Caco-2 (cell line): ENCODE measurements at regions of chr14 and their contacts with region 1.

Region 1: GRCh38 chr14:50396631-50397390 is at the start of gene CDKL1:
- DNase-seq: peak; percentile 74 to 83
- H3K4me3 ChIP-seq: peak within 1 kb of the TSS; percentile 38
- H3K4me3 Mint-ChIP-seq: peak within 1 kb of the TSS; percentile 87
- H3K27ac Mint-ChIP-seq: peak within 1 kb of the TSS; percentile 90
- H3K4me1 ChIP-seq: no peaks in the 10 kb centered on the region; the same call in none of the 2 replicates
- H3K4me1 Mint-ChIP-seq: no peaks in the 10 kb centered on the region
- H3K27me3 ChIP-seq: no peaks in the 10 kb centered on the region
- H3K27me3 Mint-ChIP-seq: no peaks in the 10 kb centered on the region
- CTCF ChIP-seq: no peak
- total RNA-seq, gene CDKL1: 4.5 and 5.4 TPM in 2 replicates

Region 2: GRCh38 chr14:50173891-50174290 is 222.9 kb before region 1 on chr14:
- CTCF ChIA-PET with region 1: interaction called, 13 read pairs
- POLR2A ChIA-PET with region 1: no interaction called
- intact Hi-C with region 1: no loop called
- DNase-seq: no peak
- H3K4me3 ChIP-seq: no peak overlapping the region
- H3K4me3 Mint-ChIP-seq: no peak overlapping the region
- H3K27ac Mint-ChIP-seq: no peak overlapping the region
- H3K4me1 ChIP-seq: no peaks in the 10 kb centered on the region
- H3K4me1 Mint-ChIP-seq: no peaks in the 10 kb centered on the region
- H3K27me3 ChIP-seq: no peaks in the 10 kb centered on the region
- H3K27me3 Mint-ChIP-seq: no peaks in the 10 kb centered on the region
- CTCF ChIP-seq: no peak

Region 3: GRCh38 chr14:50321009-50321660 is 75.7 kb before region 1 on chr14:
- CTCF ChIA-PET with region 1: interaction called, 4 read pairs
- POLR2A ChIA-PET with region 1: interaction called, 4 read pairs
- intact Hi-C with region 1: loop called (anchors 2 kb)
- DNase-seq: peak; percentile 74 to 75
- H3K4me3 ChIP-seq: no peak overlapping the region
- H3K4me3 Mint-ChIP-seq: no peak overlapping the region
- H3K27ac Mint-ChIP-seq: no peak overlapping the region
- H3K4me1 ChIP-seq: no peaks in the 10 kb centered on the region; the same call in 1 of the 2 replicates
- H3K4me1 Mint-ChIP-seq: no peaks in the 10 kb centered on the region
- H3K27me3 ChIP-seq: no peaks in the 10 kb centered on the region
- H3K27me3 Mint-ChIP-seq: no peaks in the 10 kb centered on the region
- CTCF ChIP-seq: peak; percentile 73 to 90

Region 4: DNA sequence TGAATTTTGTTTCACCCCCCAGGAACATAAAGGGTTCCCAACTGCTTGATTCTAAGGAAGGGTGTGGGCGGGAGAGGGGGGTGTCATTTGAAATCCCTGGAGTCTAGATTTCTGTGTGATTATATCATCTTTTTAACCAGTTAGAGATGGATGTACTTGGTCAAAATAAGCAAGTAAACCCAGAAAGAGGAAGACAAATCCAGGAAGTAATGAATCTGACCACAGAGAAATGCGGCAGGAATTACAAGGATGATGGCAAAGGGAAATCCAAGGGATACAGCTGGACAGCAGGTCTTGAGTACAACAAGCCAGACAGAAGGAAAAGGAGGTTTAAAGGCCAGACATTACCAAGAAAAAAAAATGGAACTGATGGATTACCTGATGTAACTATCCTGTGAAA is 45.8 kb before region 1 on chr14:
- CTCF ChIA-PET with region 1: no interaction called
- POLR2A ChIA-PET with region 1: no interaction called
- intact Hi-C with region 1: no loop called
- DNase-seq: no peak
- H3K4me3 ChIP-seq: no peak overlapping the region
- H3K4me3 Mint-ChIP-seq: no peak overlapping the region
- H3K27ac Mint-ChIP-seq: no peak overlapping the region
- H3K4me1 ChIP-seq: peaks cover 8% of the 10 kb centered on the region
- H3K4me1 Mint-ChIP-seq: peaks cover 20% of the 10 kb centered on the region
- H3K27me3 ChIP-seq: no peaks in the 10 kb centered on the region
- H3K27me3 Mint-ChIP-seq: no peaks in the 10 kb centered on the region
- CTCF ChIP-seq: no peak

Region 5: GRCh38 chr14:50447461-50447860 is 50.6 kb after region 1 on chr14:
- CTCF ChIA-PET with region 1: interaction called, 3 read pairs
- POLR2A ChIA-PET with region 1: no interaction called
- intact Hi-C with region 1: loop called (anchors 5 kb)
- DNase-seq: no peak
- H3K4me3 ChIP-seq: no peak overlapping the region
- H3K4me3 Mint-ChIP-seq: no peak overlapping the region
- H3K27ac Mint-ChIP-seq: no peak overlapping the region
- H3K4me1 ChIP-seq: peaks cover 13% of the 10 kb centered on the region
- H3K4me1 Mint-ChIP-seq: no peaks in the 10 kb centered on the region
- H3K27me3 ChIP-seq: no peaks in the 10 kb centered on the region
- H3K27me3 Mint-ChIP-seq: no peaks in the 10 kb centered on the region
- CTCF ChIP-seq: no peak